A673 (cell line): ENCODE measurements at regions of chr3 and their contacts with region 1.

Region 1: DNA sequence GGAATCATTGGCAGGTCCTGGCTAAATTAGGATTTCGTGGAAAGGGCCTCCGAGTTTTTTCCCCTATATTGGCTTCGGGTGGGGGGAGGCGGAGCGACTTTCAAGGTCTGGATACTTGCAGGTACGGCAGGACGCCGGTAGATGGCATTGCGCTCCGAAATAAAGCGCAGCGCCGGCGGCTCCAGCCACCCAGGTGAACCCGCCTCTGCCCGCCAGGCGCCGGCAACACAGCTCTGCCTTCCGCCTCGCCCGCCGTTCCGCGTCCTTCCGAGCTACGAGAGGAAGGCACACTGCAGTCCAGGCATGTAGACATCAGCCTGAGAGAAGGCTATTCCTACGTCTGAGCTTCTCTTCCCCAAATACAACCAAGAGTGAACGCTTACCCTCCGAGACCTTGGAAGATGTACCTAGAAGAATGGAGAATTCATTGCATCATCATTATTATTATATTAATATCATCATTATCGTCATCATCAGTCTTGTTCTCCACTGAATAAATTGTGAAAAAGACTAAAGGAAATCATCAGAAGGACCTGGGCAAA is 514.1 kb downstream of the MECOM start:
- DNase-seq: peak; percentile 84
- H3K4me3 ChIP-seq: peak overlapping the region; percentile 18
- H3K27ac ChIP-seq: no peak overlapping the region
- H3K4me1 ChIP-seq: peaks cover 12% of the 10 kb centered on the region
- H3K27me3 ChIP-seq: peaks cover 96% of the 10 kb centered on the region
- CTCF ChIP-seq: peak; percentile 87

Region 2: GRCh38 chr3:168812234-168812633 is 337.2 kb before region 1 on chr3:
- CTCF ChIA-PET with region 1: no interaction called
- POLR2A ChIA-PET with region 1: no interaction called
- intact Hi-C with region 1: no loop called
- DNase-seq: peak; percentile 60
- H3K4me3 ChIP-seq: no peak overlapping the region
- H3K27ac ChIP-seq: no peak overlapping the region
- H3K4me1 ChIP-seq: no peaks in the 10 kb centered on the region
- H3K27me3 ChIP-seq: no peaks in the 10 kb centered on the region
- CTCF ChIP-seq: no peak

Region 3: GRCh38 chr3:169002689-169003088 is 146.7 kb before region 1 on chr3:
- CTCF ChIA-PET with region 1: no interaction called
- POLR2A ChIA-PET with region 1: no interaction called
- intact Hi-C with region 1: no loop called
- DNase-seq: no peak
- H3K4me3 ChIP-seq: no peak overlapping the region
- H3K27ac ChIP-seq: no peak overlapping the region
- H3K4me1 ChIP-seq: no peaks in the 10 kb centered on the region
- H3K27me3 ChIP-seq: peaks cover 50% of the 10 kb centered on the region
- CTCF ChIP-seq: no peak

Region 4: GRCh38 chr3:169295126-169295525 is 145.7 kb after region 1 on chr3:
- CTCF ChIA-PET with region 1: no interaction called
- POLR2A ChIA-PET with region 1: no interaction called
- intact Hi-C with region 1: loop called (anchors 2 kb)
- DNase-seq: peak; percentile 41
- H3K4me3 ChIP-seq: no peak overlapping the region
- H3K27ac ChIP-seq: no peak overlapping the region
- H3K4me1 ChIP-seq: no peaks in the 10 kb centered on the region
- H3K27me3 ChIP-seq: peaks cover 17% of the 10 kb centered on the region
- CTCF ChIP-seq: peak; percentile 72

Region 5: DNA sequence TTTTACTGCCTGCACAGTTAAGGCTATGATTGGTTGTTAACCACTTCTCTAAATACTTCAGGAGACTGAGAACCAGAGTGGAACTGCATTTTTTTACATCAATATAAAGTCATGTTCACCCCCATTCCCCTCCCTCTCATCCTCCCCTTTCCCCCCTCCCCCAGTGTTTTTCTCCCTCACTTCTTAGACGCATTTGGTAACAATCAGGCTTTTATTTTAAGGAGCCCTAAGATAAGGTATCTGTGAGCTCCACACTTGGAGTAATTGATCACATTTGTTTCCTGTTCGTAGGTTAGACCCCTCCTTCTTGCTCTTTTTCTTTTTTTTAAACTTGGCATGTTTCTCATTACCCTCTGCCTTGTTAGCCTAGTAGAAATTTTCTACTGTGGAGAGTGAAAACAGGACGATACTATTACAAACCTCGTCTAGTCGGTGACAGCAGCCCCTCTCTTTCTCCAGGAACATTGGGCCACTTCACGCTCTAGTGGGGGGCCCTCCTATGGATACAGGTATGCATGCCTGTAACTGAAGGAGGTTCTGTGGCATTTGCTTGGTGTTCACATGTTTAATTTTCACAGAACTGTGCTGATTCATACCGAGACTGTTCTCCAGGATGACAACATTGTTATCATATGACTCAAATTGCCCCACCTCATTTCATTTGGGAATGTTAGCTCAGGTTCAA is 199.7 kb after region 1 on chr3:
- CTCF ChIA-PET with region 1: no interaction called
- POLR2A ChIA-PET with region 1: no interaction called
- intact Hi-C with region 1: loop called (anchors 5 kb)
- DNase-seq: no peak
- H3K4me3 ChIP-seq: no peak overlapping the region
- H3K27ac ChIP-seq: no peak overlapping the region
- H3K4me1 ChIP-seq: no peaks in the 10 kb centered on the region
- H3K27me3 ChIP-seq: peaks cover 93% of the 10 kb centered on the region
- CTCF ChIP-seq: no peak

Region 6: GRCh38 chr3:169879845-169880575 is 730.6 kb after region 1 on chr3:
- CTCF ChIA-PET with region 1: no interaction called
- POLR2A ChIA-PET with region 1: no interaction called
- intact Hi-C with region 1: no loop called
- DNase-seq: no peak
- H3K4me3 ChIP-seq: no peak overlapping the region
- H3K27ac ChIP-seq: no peak overlapping the region
- H3K4me1 ChIP-seq: no peaks in the 10 kb centered on the region
- H3K27me3 ChIP-seq: no peaks in the 10 kb centered on the region
- CTCF ChIP-seq: no peak